ENCODE measurements at regions of chr3 and their contacts with region 1.

Region 1: DNA sequence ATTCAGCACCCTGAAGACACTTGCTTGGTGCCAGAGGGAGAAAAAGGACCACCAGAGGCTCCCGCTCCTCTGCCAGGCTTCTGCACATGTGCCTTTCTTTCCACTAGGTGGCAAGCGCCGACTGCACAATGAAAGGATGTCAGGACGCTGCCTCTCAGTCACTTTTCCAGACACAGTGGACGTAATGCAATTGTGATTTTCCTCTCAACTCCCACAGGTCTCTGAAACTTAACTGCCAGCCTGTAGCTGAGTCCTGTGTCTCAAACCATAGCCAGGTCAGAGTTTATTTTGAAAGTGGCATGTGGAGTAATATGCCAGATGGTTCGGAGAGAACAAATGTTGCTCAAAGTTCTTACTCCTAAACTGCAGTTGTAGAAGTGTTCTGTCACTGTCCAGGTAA is 162.9 kb downstream of the ITPR1 start:
- DNase-seq: peak; percentile 70
- H3K4me3 ChIP-seq: no peak overlapping the region
- H3K27ac ChIP-seq: no peak overlapping the region
- H3K4me1 ChIP-seq: peaks cover 0 to 7% (median 0%) of the 10 kb centered on the region in 6 donors
- H3K27me3 ChIP-seq: no peaks in the 10 kb centered on the region
- CTCF ChIP-seq: peak in 8 of 11 experiments; percentile 57 to 77 (median 62)
- POLR2A ChIP-seq: no peak

Region 2: GRCh38 chr3:4850928-4851265 is 194.8 kb after region 1 on chr3:
- intact Hi-C with region 1: no loop called
- DNase-seq: no peak
- H3K4me3 ChIP-seq: no peak overlapping the region
- H3K27ac ChIP-seq: peak overlapping the region in 6 of 8 donors; percentile 40 to 64 (median 57)
- H3K4me1 ChIP-seq: peaks cover 0 to 71% (median 29%) of the 10 kb centered on the region in 6 donors
- H3K27me3 ChIP-seq: no peaks in the 10 kb centered on the region
- CTCF ChIP-seq: no peak
- POLR2A ChIP-seq: no peak

Region 3: DNA sequence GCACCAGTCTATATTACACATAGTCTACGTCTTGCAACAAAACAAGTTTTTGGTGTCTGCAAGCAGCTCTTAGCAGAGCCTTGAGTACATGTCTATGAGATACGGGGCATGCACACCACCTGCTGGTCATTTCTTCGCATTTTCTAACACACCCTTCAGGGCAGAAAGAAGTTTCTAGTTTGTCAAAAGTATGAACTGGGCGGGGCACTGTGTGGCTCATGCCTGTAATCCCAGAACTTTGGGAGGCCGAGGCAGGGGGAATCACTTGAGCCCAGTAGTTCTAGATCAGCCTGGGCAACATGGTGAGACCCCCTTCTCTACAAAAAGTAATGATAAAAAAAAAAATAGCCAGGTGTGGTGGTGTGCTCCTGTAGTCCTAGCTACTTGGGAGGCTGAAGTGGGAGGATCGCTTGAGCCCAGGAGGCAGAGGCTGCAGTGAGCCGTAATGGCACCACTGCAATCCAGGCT is 401.8 kb after region 1 on chr3:
- intact Hi-C with region 1: loop called (anchors 10 kb)
- DNase-seq: peak; percentile 84
- H3K4me3 ChIP-seq: no peak overlapping the region
- H3K27ac ChIP-seq: peak overlapping the region in 2 of 8 donors; percentile 18 to 26
- H3K4me1 ChIP-seq: peaks cover 11 to 54% (median 33%) of the 10 kb centered on the region in 6 donors
- H3K27me3 ChIP-seq: peaks cover 0 to 4% (median 0%) of the 10 kb centered on the region in 7 donors
- CTCF ChIP-seq: peak; percentile 52 to 89 (median 80)
- POLR2A ChIP-seq: no peak